AG04450 (cell line): ENCODE measurements at regions of chr11 and their contacts with region 1.

Region 1: GRCh38 chr11:110429731-110430266 is at the start of gene FDX1:
- DNase-seq: peak; percentile 29
- H3K4me3 ChIP-seq: peak within 1 kb of the TSS; percentile 95
- H3K27ac ChIP-seq: peak within 1 kb of the TSS; percentile 69
- H3K27me3 ChIP-seq: no peaks in the 10 kb centered on the region
- CTCF ChIP-seq: peak; percentile 41
- polyA plus RNA-seq, gene FDX1: 6.7 and 8.9 TPM in 2 replicates

Region 2: GRCh38 chr11:109939166-109939810 is 490.5 kb before region 1 on chr11:
- CTCF ChIA-PET with region 1: interaction called, 4 read pairs
- POLR2A ChIA-PET with region 1: interaction called, 12 read pairs
- DNase-seq: peak; percentile 51
- H3K4me3 ChIP-seq: no peak overlapping the region
- H3K27ac ChIP-seq: no peak overlapping the region
- H3K27me3 ChIP-seq: no peaks in the 10 kb centered on the region
- CTCF ChIP-seq: peak; percentile 79

Region 3: DNA sequence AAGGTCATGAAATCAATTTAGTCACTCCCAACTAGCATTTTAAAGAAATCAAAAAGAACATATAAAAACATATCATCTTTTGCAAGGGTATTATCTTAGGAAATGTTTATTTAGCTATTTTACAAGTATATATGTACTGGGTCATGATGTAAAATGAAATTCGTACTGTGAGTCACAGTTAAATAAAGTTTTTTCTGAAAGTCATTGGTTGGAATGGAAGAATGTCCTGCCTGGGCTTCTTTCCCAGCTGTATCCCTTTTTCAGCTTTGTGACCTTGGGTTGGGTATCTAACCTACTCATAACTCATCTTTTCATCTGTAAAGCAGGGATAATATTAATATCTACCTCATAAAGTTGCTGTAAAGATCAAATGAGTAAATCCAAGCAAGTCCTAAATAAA is 15.6 kb after region 1 on chr11:
- CTCF ChIA-PET with region 1: interaction called, 17 read pairs
- POLR2A ChIA-PET with region 1: no interaction called
- DNase-seq: no peak
- H3K4me3 ChIP-seq: no peak overlapping the region
- H3K27ac ChIP-seq: no peak overlapping the region
- H3K27me3 ChIP-seq: no peaks in the 10 kb centered on the region
- CTCF ChIP-seq: no peak

Region 4: GRCh38 chr11:111344032-111344431 is 914.2 kb after region 1 on chr11:
- CTCF ChIA-PET with region 1: interaction called, 12 read pairs
- POLR2A ChIA-PET with region 1: no interaction called
- DNase-seq: no peak
- H3K4me3 ChIP-seq: no peak overlapping the region
- H3K27ac ChIP-seq: no peak overlapping the region
- H3K27me3 ChIP-seq: no peaks in the 10 kb centered on the region
- CTCF ChIP-seq: no peak